ENCODE measurements at regions of chr12 and their contacts with region 1.

Region 1: GRCh38 chr12:5511644-5512600 is 80.0 kb downstream of the NTF3 start:
- DNase-seq: no peak
- H3K4me3 ChIP-seq: no peak overlapping the region
- H3K27me3 ChIP-seq: 0 out of 2 replicates have a peak, but pooled peaks cover 1% of the 10 kb centered on the region
- CTCF ChIP-seq: peak; percentile 84

Region 2: GRCh38 chr12:5210179-5210922 is 301.6 kb before region 1 on chr12:
- CTCF ChIA-PET with region 1: no interaction called
- POLR2A ChIA-PET with region 1: no interaction called
- DNase-seq: no peak
- H3K4me3 ChIP-seq: no peak overlapping the region
- H3K27me3 ChIP-seq: peaks cover 6% of the 10 kb centered on the region
- CTCF ChIP-seq: no peak

Region 3: GRCh38 chr12:5499566-5500330 is 12.2 kb before region 1 on chr12:
- CTCF ChIA-PET with region 1: interaction called, 11 read pairs
- POLR2A ChIA-PET with region 1: no interaction called
- DNase-seq: peak; percentile 90
- H3K4me3 ChIP-seq: no peak overlapping the region
- H3K27me3 ChIP-seq: no peaks in the 10 kb centered on the region
- CTCF ChIP-seq: no peak

Region 4: GRCh38 chr12:5524769-5525436 is 13.0 kb after region 1 on chr12:
- CTCF ChIA-PET with region 1: interaction called, 12 read pairs
- POLR2A ChIA-PET with region 1: no interaction called
- DNase-seq: no peak
- H3K4me3 ChIP-seq: no peak overlapping the region
- H3K27me3 ChIP-seq: 0 out of 2 replicates have a peak, but pooled peaks cover 1% of the 10 kb centered on the region
- CTCF ChIP-seq: no peak